ENCODE measurements at regions of chr19 and their contacts with region 1.

Region 1: DNA sequence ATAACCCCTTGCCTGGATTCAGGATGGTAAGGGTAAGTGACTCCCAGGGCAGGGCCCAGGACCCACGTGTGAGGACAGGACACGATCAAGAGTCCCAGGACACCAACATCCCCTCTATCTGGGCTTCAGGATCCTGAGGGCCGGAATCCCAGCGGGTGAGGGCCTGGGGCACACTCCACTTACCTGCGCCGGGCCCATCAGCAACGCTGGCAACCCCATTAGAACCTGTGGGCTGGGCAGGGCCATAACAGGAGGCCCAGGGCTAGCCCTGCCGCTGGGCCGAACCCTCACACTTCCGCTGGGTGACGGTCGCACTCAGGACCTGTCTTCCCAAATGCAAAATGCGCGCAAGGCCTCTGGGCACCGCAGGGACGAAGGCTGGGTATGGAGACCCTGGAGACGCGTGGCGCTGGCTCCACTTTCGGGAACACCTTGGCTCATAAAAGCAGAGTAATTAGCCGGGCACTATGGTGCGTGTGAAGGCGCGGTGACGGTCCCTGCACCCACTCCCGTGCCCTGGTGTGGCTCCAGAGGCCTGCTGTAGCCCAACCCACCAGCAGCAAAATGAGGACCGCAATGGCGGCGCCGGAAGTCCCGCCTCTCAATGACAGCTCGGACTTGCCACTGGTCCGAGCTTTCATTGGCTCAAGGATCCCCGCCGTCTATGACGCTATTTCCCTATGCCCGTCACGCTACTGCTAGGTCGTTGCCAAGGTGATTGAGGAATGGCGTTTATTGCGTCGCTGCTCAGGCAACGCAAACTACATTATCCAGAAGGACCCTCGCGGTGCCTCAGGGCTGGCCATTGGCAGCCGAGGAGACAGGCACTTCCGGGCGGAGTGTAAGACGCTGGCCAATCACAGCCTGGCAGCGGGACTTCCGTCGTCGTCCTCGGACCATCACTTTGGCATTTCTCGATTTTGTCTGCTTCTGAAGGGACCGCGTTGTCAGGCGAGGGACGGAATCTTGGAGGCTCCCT is at the start of gene ZNF132:
- DNase-seq: peak; percentile 98 to 99
- H3K4me3 ChIP-seq: peak within 1 kb of the TSS; percentile 71 to 72
- H3K27ac ChIP-seq: peak within 1 kb of the TSS; percentile 85 to 89
- H3K4me1 ChIP-seq: peaks cover 4 to 14% of the 10 kb centered on the region in 2 donors
- H3K27me3 ChIP-seq: no peaks in the 10 kb centered on the region
- CTCF ChIP-seq: no peak
- total RNA-seq, gene ZNF132: 5.2 TPM

Region 2: GRCh38 chr19:58326914-58327726 is 112.7 kb before region 1 on chr19 and contains the start of gene ZSCAN22:
- intact Hi-C with region 1: loop called (anchors 1 kb)
- DNase-seq: peak; percentile 78 to 98
- H3K4me3 ChIP-seq: peak within 1 kb of the TSS; percentile 91 to 92
- H3K27ac ChIP-seq: peak within 1 kb of the TSS; percentile 91 to 96
- H3K4me1 ChIP-seq: peaks cover 4 to 13% of the 10 kb centered on the region in 2 donors
- H3K27me3 ChIP-seq: no peaks in the 10 kb centered on the region
- CTCF ChIP-seq: no peak
- total RNA-seq, gene ZSCAN22: 1.9 TPM

Region 3: GRCh38 chr19:58386576-58387337 is 53.1 kb before region 1 on chr19 and contains the start of gene RPS5:
- intact Hi-C with region 1: loop called (anchors 1 kb)
- DNase-seq: peak; percentile 87 to 98
- H3K4me3 ChIP-seq: peak within 1 kb of the TSS; percentile 81 to 84
- H3K27ac ChIP-seq: peak within 1 kb of the TSS; percentile 87 to 96
- H3K4me1 ChIP-seq: peaks cover 10 to 31% of the 10 kb centered on the region in 2 donors
- H3K27me3 ChIP-seq: no peaks in the 10 kb centered on the region
- CTCF ChIP-seq: no peak
- total RNA-seq, gene RPS5: 1,483 TPM

Region 4: DNA sequence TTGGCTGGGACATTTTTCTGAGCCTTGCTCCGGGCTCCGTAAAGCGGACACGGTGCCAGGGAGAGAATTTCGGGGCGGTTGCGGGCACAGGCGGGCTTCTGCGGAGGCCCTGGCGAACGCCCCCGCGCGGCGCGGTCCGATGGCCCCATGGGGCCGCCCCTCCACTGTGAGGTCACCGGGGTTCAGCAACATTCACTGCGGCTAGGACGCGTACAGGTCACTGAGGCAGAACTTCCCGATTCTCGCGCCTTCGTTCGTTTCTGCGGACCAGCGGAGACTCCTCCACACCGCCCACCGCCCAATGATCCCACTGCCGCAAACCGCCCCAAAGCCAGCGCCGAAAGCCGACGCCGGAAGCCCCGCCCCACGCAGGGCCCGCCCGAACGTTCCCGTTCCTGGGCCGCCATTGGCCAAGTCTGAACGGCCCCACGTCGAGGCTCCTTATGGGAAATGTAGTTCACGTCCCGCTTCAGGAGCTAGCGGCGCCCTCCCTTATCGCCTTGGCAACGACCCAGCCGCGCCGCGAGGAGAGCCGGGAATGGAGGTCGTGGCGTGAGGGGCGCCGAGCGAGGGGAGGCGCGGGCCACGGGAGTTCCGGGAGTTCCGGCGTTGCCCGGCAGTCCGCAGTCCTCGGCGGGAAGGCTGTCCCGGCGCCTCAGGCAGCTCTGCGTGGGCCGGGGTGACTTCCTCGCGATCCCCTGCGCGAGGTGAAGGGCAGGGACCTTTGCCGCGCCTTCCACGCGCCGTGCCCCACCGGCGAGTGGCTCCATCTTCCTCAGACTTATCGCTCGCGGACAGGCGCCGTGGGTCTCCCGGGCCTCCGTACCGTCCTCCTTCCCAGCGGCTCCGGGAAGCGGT is 31.5 kb before region 1 on chr19 and contains the start of gene ZNF584:
- intact Hi-C with region 1: loop called (anchors 1 kb)
- DNase-seq: peak; percentile 76 to 97
- H3K4me3 ChIP-seq: peak within 1 kb of the TSS; percentile 97
- H3K27ac ChIP-seq: peak within 1 kb of the TSS; percentile 86 to 93
- H3K4me1 ChIP-seq: peaks cover 3 to 16% of the 10 kb centered on the region in 2 donors
- H3K27me3 ChIP-seq: no peaks in the 10 kb centered on the region
- CTCF ChIP-seq: no peak
- total RNA-seq, gene ZNF584: 17.9 TPM

Region 5: GRCh38 chr19:58466760-58467589 is 27.1 kb after region 1 on chr19 and contains the start of gene ZNF324:
- intact Hi-C with region 1: loop called (anchors 1 kb)
- DNase-seq: peak; percentile 93 to 99
- H3K4me3 ChIP-seq: peak within 1 kb of the TSS; percentile 95 to 96
- H3K27ac ChIP-seq: peak within 1 kb of the TSS; percentile 84 to 88
- H3K4me1 ChIP-seq: peaks cover 0 to 10% of the 10 kb centered on the region in 2 donors
- H3K27me3 ChIP-seq: no peaks in the 10 kb centered on the region
- CTCF ChIP-seq: no peak
- total RNA-seq, gene ZNF324: 2.1 TPM

Region 6: DNA sequence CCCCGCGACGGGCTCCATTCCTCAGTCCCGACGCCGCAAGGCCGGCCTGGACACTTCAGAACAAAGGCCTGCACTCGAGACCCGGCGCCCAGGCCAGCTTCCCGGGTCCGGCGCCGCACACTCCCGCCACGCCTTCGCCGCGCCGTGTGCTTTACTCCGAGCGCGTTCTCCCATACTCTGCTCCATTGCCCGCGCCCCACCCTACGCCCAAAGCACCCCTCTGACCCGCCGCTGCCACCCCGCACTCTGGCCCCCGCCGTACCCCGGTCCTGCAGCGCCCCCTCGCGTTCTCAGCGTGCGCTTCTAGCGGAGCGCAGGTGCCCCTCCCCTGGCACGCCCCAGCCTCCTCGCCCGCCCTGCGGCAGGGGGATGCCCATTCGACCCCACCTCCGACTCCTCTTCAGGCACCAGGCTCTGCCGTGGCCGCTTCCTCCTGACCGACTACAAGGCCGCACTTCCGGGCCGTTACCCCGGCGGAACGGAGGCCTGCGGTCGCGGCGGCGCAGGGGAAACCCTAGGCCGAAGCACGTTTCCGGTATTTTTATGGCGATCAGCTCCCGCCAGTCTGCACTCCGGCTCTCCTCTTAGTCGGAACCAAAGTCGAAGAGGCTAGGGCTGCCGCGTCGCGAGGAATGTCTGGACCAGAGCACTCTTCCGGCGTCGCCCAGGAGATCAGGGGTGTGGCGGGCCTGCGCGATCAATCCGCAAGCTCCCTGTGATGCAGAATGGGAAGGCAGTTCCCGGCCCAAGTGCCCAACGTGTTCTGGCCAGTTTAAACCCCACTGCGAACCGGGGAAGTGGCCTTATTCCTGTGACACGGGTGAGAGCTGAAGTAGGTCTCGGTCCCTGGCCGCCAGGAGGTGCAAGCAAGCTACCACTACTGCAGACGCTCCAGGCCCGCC is 79.7 kb after region 1 on chr19 and contains the start of gene ZBTB45:
- intact Hi-C with region 1: loop called (anchors 1 kb)
- DNase-seq: peak; percentile 70 to 96
- H3K4me3 ChIP-seq: peak within 1 kb of the TSS; percentile 87 to 90
- H3K27ac ChIP-seq: peak within 1 kb of the TSS; percentile 94 to 96
- H3K4me1 ChIP-seq: peaks cover 20 to 29% of the 10 kb centered on the region in 2 donors
- H3K27me3 ChIP-seq: no peaks in the 10 kb centered on the region
- CTCF ChIP-seq: peak; percentile 76 to 94 (median 93)
- total RNA-seq, gene ZBTB45: 46.5 TPM